Activated CD8-positive, alpha-beta T cell treated with anti-CD3 and anti-CD28 coated beads for 36 hours (primary cell): ENCODE measurements at regions of chr14 and their contacts with region 1.

Region 1: GRCh38 chr14:90903101-90903500 is 86.9 kb upstream of the TTC7B start:
- DNase-seq: peak; percentile 77
- ATAC-seq: peak; percentile 84
- H3K4me3 Mint-ChIP-seq: no peak overlapping the region
- H3K27ac Mint-ChIP-seq: no peak overlapping the region
- H3K4me1 Mint-ChIP-seq: peaks cover 19% of the 10 kb centered on the region
- H3K27me3 Mint-ChIP-seq: no peaks in the 10 kb centered on the region
- CTCF ChIP-seq: peak; percentile 92

Region 2: DNA sequence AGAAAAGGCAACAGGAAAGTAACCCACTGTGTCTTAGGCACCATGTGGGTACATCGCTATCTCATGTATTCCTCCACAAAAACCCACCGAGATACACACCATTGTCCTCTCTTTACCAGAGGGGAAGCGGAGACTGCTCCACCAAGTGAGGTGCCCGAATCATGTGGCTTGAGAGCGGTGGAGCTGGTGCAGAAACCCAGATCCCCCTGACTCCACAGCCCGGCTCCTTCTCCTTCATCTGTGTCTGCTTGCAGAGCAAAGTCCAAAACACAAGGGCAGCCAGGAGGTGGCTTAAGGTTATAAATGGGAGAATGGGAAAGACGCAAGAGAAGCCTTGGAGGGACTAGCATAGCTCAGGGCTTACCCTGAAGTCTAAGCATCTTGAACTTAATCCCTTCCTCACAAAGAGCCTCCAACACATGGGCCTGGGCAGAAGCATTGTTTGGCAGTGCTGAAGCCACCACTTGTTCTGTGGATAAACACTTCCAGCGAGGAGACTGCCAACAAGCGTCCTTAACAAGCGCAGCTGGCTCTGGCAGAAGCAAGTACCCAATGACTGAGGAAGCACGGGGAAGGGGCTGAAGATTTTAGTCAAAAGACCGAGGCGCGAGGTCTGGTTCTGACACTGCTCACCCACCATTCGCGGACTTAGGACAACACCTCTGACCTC is 169.8 kb before region 1 on chr14:
- CTCF ChIA-PET with region 1: no interaction called
- POLR2A ChIA-PET with region 1: no interaction called
- intact Hi-C with region 1: no loop called
- DNase-seq: no peak
- ATAC-seq: no peak
- H3K4me3 Mint-ChIP-seq: no peak overlapping the region
- H3K27ac Mint-ChIP-seq: no peak overlapping the region
- H3K4me1 Mint-ChIP-seq: no peaks in the 10 kb centered on the region
- H3K27me3 Mint-ChIP-seq: peaks cover 2% of the 10 kb centered on the region
- CTCF ChIP-seq: no peak

Region 3: GRCh38 chr14:90959344-90959743 is 56.2 kb after region 1 on chr14:
- CTCF ChIA-PET with region 1: interaction called, 14 read pairs
- POLR2A ChIA-PET with region 1: no interaction called
- intact Hi-C with region 1: no loop called
- DNase-seq: no peak
- ATAC-seq: peak; percentile 53
- H3K4me3 Mint-ChIP-seq: no peak overlapping the region
- H3K27ac Mint-ChIP-seq: no peak overlapping the region
- H3K4me1 Mint-ChIP-seq: peaks cover 4% of the 10 kb centered on the region
- H3K27me3 Mint-ChIP-seq: no peaks in the 10 kb centered on the region
- CTCF ChIP-seq: no peak

Region 4: DNA sequence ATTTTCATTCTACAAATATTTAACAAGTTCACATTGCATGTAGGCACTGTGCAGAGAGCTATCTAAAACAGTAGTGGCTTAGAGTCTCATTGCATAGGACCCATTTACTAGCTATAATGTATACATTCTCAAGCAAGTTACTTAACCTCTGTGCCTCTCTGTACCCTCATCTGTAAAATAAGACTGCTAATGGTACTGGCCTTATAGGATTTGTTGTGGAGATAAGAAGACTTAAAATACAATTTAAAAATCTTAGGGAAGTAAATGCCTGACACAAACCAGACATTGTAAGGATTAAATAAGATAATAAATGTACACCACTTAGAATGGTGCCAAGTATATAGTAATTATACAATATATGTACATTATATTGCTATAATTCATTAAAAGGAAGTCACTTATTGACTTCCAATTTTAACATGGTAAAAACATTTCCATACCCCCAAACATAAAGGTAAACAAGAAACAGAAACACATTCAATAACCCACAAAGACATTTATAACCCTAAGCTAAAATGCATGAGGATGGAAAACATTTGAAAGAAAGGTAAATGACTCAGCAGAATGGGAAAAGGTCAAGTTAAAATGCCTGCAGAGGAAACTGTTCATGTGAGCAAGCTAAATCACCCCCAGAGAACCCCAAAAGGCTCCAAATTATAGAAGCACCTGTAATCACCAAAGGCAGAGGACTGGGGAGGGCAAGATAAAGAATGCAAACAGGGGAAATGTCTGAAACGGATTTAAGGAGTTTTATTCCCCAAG is 126.5 kb after region 1 on chr14:
- CTCF ChIA-PET with region 1: interaction called, 10 read pairs
- POLR2A ChIA-PET with region 1: no interaction called
- intact Hi-C with region 1: no loop called
- DNase-seq: no peak
- ATAC-seq: peak; percentile 74
- H3K4me3 Mint-ChIP-seq: no peak overlapping the region
- H3K27ac Mint-ChIP-seq: peak overlapping the region; percentile 7
- H3K4me1 Mint-ChIP-seq: peaks cover 51% of the 10 kb centered on the region
- H3K27me3 Mint-ChIP-seq: no peaks in the 10 kb centered on the region
- CTCF ChIP-seq: no peak

Region 5: DNA sequence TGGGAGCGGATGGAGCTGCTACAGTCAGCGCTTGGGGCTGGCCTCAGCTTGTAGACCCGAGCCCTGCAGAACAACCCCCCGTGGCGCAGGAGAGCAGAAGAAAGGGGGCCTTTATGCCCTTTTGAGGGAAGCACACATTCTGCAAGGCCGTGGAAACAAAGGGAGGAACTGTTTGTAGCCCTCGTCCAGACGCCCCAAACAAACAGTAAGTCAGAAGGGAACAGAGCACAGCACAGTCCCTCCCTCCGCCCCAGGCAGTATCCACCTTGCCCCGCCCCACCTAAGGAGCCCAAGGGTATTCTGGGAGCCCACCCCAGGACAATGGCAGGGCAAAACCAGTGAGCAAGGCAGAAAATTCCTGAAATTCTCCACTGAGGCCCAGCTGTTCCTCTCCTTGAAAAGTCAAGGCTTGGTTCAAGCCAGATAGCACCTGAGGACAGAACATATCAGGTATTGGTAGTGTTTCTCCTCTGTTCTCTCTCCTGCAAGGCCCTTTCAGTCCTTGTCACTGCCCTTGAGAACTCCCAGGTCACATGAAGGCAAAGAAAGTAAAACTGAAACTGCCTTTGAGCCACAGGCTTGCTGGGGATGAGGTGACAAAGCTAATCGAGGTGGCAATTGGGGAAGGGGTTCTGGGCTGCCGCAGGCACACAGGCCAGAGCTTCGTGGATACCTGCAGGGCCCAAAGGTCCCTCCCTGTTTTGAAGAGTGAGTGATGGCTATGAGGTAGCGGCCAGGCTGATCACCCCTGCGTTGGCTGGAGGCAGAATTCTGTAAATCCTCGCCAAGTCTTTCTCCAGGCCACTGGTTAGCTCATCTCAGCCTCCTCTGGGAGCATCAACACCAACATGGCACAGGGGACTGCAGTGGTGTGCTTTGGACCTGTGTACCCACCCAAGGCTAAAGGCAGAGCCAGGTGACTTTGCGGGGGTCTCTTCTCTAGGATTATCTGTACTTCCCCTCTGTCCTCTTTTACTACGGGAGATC is 211.3 kb after region 1 on chr14:
- CTCF ChIA-PET with region 1: interaction called, 25 read pairs
- POLR2A ChIA-PET with region 1: interaction called, 3 read pairs
- intact Hi-C with region 1: no loop called
- DNase-seq: peak; percentile 84
- ATAC-seq: peak; percentile 84
- H3K4me3 Mint-ChIP-seq: peak overlapping the region; percentile 92
- H3K27ac Mint-ChIP-seq: peak overlapping the region; percentile 92
- H3K4me1 Mint-ChIP-seq: peaks cover 57% of the 10 kb centered on the region
- H3K27me3 Mint-ChIP-seq: no peaks in the 10 kb centered on the region
- CTCF ChIP-seq: no peak

Region 6: GRCh38 chr14:91154851-91155625 is 251.9 kb after region 1 on chr14:
- CTCF ChIA-PET with region 1: interaction called, 10 read pairs
- POLR2A ChIA-PET with region 1: no interaction called
- intact Hi-C with region 1: no loop called
- DNase-seq: peak; percentile 50
- ATAC-seq: peak; percentile 69
- H3K4me3 Mint-ChIP-seq: no peak overlapping the region
- H3K27ac Mint-ChIP-seq: peak overlapping the region; percentile 18
- H3K4me1 Mint-ChIP-seq: peaks cover 15% of the 10 kb centered on the region
- H3K27me3 Mint-ChIP-seq: no peaks in the 10 kb centered on the region
- CTCF ChIP-seq: no peak

Region 7: GRCh38 chr14:91286530-91286937 is 383.4 kb after region 1 on chr14:
- CTCF ChIA-PET with region 1: interaction called, 11 read pairs
- POLR2A ChIA-PET with region 1: no interaction called
- intact Hi-C with region 1: loop called (anchors 10 kb)
- DNase-seq: peak; percentile 90
- ATAC-seq: peak; percentile 85
- H3K4me3 Mint-ChIP-seq: no peak overlapping the region
- H3K27ac Mint-ChIP-seq: peak overlapping the region; percentile 82
- H3K4me1 Mint-ChIP-seq: peaks cover 15% of the 10 kb centered on the region
- H3K27me3 Mint-ChIP-seq: no peaks in the 10 kb centered on the region
- CTCF ChIP-seq: peak; percentile 96